ENCODE measurements at regions of chr4 and their contacts with region 1.

Region 1: GRCh38 chr4:5399790-5400421 is 308.5 kb downstream of the EVC2 start:
- DNase-seq: peak; percentile 44
- H3K4me3 Mint-ChIP-seq: no peak overlapping the region
- H3K27ac Mint-ChIP-seq: no peak overlapping the region
- H3K4me1 Mint-ChIP-seq: no peaks in the 10 kb centered on the region
- H3K27me3 Mint-ChIP-seq: no peaks in the 10 kb centered on the region
- CTCF ChIP-seq: peak; percentile 56

Region 2: GRCh38 chr4:4990329-4990728 is 409.6 kb before region 1 on chr4:
- CTCF ChIA-PET with region 1: no interaction called
- POLR2A ChIA-PET with region 1: no interaction called
- intact Hi-C with region 1: no loop called
- DNase-seq: no peak
- H3K4me3 Mint-ChIP-seq: no peak overlapping the region
- H3K27ac Mint-ChIP-seq: no peak overlapping the region
- H3K4me1 Mint-ChIP-seq: peaks cover 28% of the 10 kb centered on the region
- H3K27me3 Mint-ChIP-seq: peaks cover 11% of the 10 kb centered on the region
- CTCF ChIP-seq: no peak

Region 3: DNA sequence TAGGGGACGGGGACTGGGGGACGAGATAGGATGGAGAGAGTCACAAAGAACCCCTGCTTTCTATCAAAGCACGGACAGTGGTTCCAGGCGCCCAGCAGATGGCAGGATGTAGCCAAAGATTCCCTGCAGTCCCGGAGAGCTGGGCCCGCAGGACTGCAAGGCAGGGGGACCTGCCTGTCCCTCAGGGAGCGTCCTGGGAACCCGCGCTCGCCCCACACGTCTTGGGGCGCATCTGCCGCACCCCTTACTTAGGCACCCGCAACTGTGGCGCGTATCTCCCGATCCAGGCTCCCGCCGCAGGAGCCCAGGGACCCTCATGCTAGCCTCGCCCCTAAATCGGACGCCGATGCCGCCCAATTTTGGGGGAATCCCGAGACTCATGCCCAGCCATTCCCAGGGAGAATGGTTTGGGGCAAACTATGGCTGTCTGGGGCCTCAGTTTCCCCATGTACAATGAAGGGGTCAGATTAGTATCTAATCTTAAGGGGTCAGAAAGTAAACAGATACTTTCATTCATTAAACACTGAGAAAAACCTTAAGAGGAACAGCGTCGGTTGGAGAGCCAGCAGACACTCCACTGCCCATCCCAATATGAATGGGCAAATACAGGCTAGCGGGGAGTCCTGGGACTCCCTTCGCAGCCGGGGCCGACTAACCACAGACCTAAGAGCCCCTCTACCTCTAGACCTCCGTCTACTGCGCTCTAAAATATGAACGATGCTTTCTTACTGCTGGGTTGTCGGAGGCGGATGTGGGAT is 349.2 kb before region 1 on chr4:
- CTCF ChIA-PET with region 1: no interaction called
- POLR2A ChIA-PET with region 1: no interaction called
- intact Hi-C with region 1: loop called (anchors 10 kb)
- DNase-seq: peak; percentile 68
- H3K4me3 Mint-ChIP-seq: peak overlapping the region; percentile 68
- H3K27ac Mint-ChIP-seq: no peak overlapping the region
- H3K4me1 Mint-ChIP-seq: no peaks in the 10 kb centered on the region
- H3K27me3 Mint-ChIP-seq: no peaks in the 10 kb centered on the region
- CTCF ChIP-seq: peak; percentile 72

Region 4: GRCh38 chr4:5322321-5322720 is 77.6 kb before region 1 on chr4:
- CTCF ChIA-PET with region 1: no interaction called
- POLR2A ChIA-PET with region 1: no interaction called
- intact Hi-C with region 1: no loop called
- DNase-seq: no peak
- H3K4me3 Mint-ChIP-seq: no peak overlapping the region
- H3K27ac Mint-ChIP-seq: no peak overlapping the region
- H3K4me1 Mint-ChIP-seq: no peaks in the 10 kb centered on the region
- H3K27me3 Mint-ChIP-seq: no peaks in the 10 kb centered on the region
- CTCF ChIP-seq: no peak

Region 5: DNA sequence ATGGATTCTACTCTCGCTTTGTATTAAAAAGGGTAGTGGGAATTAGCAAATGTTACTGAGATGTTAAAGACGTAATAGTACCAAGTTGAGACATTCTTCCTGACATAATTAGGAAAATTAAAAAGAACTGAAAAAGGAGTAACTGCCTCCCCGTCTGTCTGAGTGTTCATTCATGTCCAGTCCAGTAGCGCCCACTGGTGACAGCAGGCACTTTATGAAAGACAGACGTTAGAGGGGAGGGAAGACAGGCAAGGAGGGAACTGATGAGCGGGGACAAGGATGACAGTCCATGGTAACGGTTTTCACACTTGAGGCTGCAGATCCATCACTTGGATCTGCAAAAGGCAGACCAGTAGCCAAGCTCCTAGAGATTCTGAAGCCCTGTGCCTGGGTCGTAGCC is 21.9 kb before region 1 on chr4:
- CTCF ChIA-PET with region 1: interaction called, 25 read pairs
- POLR2A ChIA-PET with region 1: no interaction called
- intact Hi-C with region 1: no loop called
- DNase-seq: peak; percentile 55
- H3K4me3 Mint-ChIP-seq: no peak overlapping the region
- H3K27ac Mint-ChIP-seq: no peak overlapping the region
- H3K4me1 Mint-ChIP-seq: no peaks in the 10 kb centered on the region
- H3K27me3 Mint-ChIP-seq: peaks cover 20% of the 10 kb centered on the region
- CTCF ChIP-seq: no peak

Region 6: DNA sequence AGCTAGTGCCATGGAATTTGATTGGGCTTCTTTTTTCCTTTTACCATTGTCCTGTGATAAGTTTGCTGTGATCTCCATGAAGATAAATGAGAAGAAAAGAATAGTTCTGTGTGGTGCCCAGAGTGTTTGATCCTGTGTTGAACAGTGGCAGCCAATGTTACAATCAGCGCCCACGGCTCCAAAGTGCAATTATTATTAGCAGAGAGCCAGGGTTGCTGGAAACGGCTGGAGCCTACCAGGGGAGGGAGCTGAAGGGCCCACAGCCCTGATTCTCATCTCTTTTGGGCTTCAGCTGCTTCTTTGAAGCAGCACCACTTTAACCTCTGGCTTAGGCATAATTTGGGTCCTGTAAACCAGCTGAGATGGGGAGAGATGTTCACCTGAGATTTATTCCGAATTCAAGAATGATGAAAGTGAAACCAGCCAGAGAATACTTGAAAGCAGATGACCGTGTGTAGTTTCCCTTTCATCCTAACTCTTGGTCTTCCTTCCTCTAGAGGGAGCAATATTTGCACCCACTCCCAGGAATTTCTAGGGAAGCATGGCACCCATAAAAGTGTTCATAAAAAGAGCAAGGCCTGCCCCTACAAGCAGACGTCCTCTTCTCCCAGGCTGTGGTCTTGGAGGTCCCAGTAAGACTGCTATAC is 10.2 kb after region 1 on chr4:
- CTCF ChIA-PET with region 1: interaction called, 10 read pairs
- POLR2A ChIA-PET with region 1: interaction called, 3 read pairs
- intact Hi-C with region 1: no loop called
- DNase-seq: peak; percentile 10
- H3K4me3 Mint-ChIP-seq: peak overlapping the region; percentile 15
- H3K27ac Mint-ChIP-seq: no peak overlapping the region
- H3K4me1 Mint-ChIP-seq: no peaks in the 10 kb centered on the region
- H3K27me3 Mint-ChIP-seq: peaks cover 10% of the 10 kb centered on the region
- CTCF ChIP-seq: no peak

Region 7: GRCh38 chr4:5459236-5459635 is 59.3 kb after region 1 on chr4:
- CTCF ChIA-PET with region 1: interaction called, 10 read pairs
- POLR2A ChIA-PET with region 1: no interaction called
- intact Hi-C with region 1: no loop called
- DNase-seq: no peak
- H3K4me3 Mint-ChIP-seq: no peak overlapping the region
- H3K27ac Mint-ChIP-seq: no peak overlapping the region
- H3K4me1 Mint-ChIP-seq: no peaks in the 10 kb centered on the region
- H3K27me3 Mint-ChIP-seq: no peaks in the 10 kb centered on the region
- CTCF ChIP-seq: no peak

Region 8: DNA sequence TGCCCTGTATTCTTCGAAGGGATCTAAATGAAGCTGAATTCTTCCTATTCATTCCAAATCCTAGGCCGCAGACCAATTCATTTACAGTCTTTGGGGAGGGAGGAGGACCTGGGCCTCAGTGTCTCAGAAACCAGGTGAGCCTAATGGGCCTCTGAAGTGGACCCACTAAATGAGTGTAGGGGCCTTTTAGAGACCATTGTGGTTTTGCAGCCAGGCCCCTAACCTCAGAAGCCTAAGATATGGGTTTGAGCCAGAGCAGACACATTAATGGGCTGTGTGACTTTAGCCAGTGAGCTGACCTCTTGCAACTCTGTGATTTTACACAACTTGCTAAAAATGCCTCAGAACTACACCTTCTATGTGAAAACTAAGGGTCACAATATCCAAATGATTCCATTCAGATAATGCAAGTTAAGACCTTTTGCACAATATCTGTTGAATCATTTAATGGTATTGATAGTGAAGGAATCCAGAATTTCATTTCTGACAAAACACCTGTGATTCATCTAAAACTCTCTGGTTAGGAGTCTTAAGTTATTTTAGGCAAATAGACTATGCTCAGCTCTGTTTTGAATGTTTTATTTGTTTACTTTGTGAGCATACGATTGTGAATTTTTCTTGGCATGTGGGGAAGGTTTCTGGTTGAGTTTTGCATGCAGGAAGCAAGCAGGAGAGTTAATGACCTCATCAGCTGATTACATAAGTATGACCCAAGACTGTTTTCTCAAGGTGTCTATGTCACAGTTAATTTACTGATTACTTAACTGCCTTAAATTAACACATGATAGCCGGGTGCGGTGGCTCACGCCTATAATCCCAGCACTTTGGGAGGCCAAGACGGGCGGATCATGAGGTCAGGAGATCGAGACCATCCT is 386.1 kb after region 1 on chr4:
- CTCF ChIA-PET with region 1: interaction called, 20 read pairs
- POLR2A ChIA-PET with region 1: no interaction called
- intact Hi-C with region 1: loop called (anchors 1 kb)
- DNase-seq: peak; percentile 69
- H3K4me3 Mint-ChIP-seq: no peak overlapping the region
- H3K27ac Mint-ChIP-seq: peak overlapping the region; percentile 58
- H3K4me1 Mint-ChIP-seq: peaks cover 9% of the 10 kb centered on the region
- H3K27me3 Mint-ChIP-seq: no peaks in the 10 kb centered on the region
- CTCF ChIP-seq: no peak

Region 9: DNA sequence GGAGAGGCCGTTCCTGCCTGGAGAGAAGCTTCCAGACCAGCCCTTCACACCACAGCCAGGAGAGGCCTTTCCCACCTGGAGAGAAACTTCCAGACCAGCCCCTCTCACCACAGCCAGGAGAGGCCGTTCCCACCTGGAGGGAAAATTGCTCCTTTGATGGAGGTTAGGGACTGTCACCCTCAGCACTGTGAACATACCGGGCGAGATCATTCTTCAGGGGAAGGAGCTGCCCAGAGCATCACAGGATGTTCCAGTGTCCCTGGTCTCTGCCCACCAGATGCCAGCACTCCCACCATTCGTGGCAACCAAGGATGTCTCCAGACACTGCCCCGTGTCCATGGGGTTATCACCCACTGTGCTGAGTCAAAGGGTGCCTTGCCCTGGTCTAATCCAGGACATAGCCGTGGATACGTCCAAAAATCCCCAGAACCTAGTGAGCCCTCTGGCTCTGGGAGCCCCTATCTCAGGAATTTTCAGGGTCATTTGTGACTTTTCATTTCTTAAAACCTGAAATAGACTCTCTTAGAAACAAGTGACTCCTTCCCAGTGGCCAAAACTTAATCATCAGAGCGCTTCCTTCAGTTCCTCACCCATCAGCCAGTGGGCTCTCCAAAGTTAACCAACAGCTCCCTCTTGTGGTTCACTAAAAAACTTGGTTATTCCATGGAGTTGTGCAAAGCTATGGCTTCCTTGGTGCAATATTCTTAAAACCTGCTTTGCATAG is 412.8 kb after region 1 on chr4:
- CTCF ChIA-PET with region 1: interaction called, 11 read pairs
- POLR2A ChIA-PET with region 1: no interaction called
- intact Hi-C with region 1: loop called (anchors 1 kb)
- DNase-seq: peak; percentile 83
- H3K4me3 Mint-ChIP-seq: no peak overlapping the region
- H3K27ac Mint-ChIP-seq: no peak overlapping the region
- H3K4me1 Mint-ChIP-seq: no peaks in the 10 kb centered on the region
- H3K27me3 Mint-ChIP-seq: no peaks in the 10 kb centered on the region
- CTCF ChIP-seq: peak; percentile 76

Measured in MCF 10A (cell line).